ENCODE measurements at regions of chr3 and their contacts with region 1.

Region 1: GRCh38 chr3:11638495-11639358 is 5.0 kb downstream of the VGLL4 start:
- DNase-seq: peak; percentile 47
- ATAC-seq: peak; percentile 0

Region 2: DNA sequence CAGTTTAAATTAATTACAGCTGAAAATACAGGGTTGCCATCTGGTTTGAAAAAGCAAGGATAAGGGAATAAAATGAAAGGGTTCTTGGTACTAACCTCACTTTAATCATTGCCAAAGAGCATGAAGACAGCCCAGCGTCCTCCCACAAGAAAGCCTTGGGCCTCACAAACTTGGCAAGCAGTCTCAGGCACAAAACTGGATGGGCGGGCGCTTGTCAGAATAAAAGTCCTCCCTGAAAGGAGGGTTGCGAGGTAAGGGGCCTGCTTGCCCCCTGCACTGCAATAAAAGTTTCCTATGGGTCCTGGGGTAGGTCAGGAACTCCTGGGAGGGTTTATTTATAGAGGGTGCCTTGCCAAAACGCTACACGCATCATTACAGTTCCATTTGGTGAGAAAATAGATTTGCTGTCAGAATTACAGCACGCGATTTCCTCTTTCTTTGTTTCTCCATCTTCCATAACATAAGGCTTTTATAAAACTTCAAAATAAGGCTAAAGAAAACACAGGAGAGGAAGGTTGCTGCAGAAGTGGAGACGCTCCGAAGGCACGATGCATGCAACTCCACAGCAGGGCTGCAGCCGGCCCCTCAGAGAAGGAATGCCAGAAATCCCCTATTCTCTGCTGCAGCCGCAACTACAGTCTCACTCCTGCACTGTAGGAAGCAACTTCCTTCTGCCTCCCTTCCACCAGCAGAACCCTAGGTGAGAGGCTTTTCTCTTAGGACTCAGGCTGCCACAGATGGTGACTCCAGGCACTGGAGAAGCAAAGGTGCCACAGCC is 56.3 kb before region 1 on chr3:
- intact Hi-C with region 1: loop called (anchors 10 kb)
- DNase-seq: peak; percentile 71
- ATAC-seq: peak; percentile 88